ENCODE measurements at regions of chr18 and their contacts with region 1.

Region 1: GRCh38 chr18:55589625-55590291 is 1.8 kb upstream of the TCF4 start:
- DNase-seq: peak; percentile 98
- H3K4me3 ChIP-seq: peak overlapping the region; percentile 57 to 77 (median 76)
- H3K27ac ChIP-seq: peak overlapping the region; percentile 83 to 92 (median 88)
- H3K4me1 ChIP-seq: peaks cover 0 to 21% (median 9%) of the 10 kb centered on the region in 4 donors
- H3K27me3 ChIP-seq: no peaks in the 10 kb centered on the region
- CTCF ChIP-seq: no peak
- EP300 ChIP-seq: peak in 1 of 4 donors; percentile 38
- POLR2A ChIP-seq: peak; percentile 15 to 20

Region 2: GRCh38 chr18:55079481-55080355 is 510.0 kb before region 1 on chr18:
- intact Hi-C with region 1: no loop called
- DNase-seq: no peak
- H3K4me3 ChIP-seq: no peak overlapping the region
- H3K27ac ChIP-seq: no peak overlapping the region
- H3K4me1 ChIP-seq: peaks cover 0 to 7% (median 0%) of the 10 kb centered on the region in 4 donors
- H3K27me3 ChIP-seq: no peaks in the 10 kb centered on the region
- CTCF ChIP-seq: no peak
- EP300 ChIP-seq: no peak
- POLR2A ChIP-seq: no peak

Region 3: DNA sequence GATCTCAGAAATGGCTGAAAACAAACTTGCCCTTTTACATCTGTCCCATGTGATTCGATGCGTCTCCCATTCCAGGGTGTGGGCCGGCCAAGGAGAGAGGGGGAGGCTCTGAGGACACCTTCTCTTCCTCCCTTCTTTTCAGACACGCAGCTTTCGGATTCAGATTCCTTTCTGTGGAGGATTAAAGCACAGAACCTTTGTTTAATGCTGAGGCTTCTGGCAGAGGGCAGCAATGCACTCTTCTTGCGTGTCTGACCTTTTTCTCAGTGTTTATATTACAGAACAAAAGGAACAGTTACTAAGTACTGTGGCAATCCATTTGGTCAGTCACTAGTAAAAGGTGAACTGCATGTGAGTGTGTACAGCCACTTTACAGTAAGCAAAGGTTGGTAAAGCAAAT is 361.6 kb before region 1 on chr18:
- intact Hi-C with region 1: loop called (anchors 5 kb)
- DNase-seq: no peak
- H3K4me3 ChIP-seq: peak overlapping the region in 1 of 4 donors; percentile 5
- H3K27ac ChIP-seq: peak overlapping the region; percentile 65 to 77 (median 71)
- H3K4me1 ChIP-seq: peaks cover 0 to 28% (median 19%) of the 10 kb centered on the region in 4 donors
- H3K27me3 ChIP-seq: no peaks in the 10 kb centered on the region
- CTCF ChIP-seq: no peak
- EP300 ChIP-seq: no peak
- POLR2A ChIP-seq: no peak

Region 4: DNA sequence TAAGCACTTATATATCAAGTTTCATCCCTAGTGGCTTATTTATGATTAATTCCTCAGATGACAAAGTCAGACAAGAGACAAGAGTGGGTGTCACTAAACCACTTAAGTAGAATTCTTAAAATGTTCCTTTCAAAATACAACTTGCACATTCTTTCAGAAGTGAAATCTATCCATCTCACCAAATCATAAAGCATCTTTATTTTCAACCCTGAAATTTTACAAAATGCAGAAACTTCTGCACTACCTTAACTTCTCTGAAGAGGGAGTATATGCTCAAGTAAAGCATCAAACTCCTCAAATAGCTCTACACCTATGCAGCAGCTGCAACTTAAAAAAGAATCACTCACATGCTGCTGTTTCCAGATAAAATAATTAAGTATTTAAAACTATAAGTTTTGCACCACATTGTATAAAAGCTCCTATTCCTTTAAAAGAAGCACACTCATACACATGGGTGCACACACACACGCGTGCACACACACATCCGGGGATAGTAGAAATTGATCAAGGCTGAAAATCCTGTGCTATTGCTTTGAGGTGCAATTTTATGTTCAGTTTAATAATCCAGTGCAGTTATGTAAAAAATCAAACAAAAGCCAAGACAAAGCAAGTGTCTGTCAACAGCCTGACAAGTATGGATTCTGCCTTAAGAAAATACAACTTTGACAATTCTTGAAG is 246.2 kb before region 1 on chr18:
- intact Hi-C with region 1: loop called (anchors 5 kb)
- DNase-seq: no peak
- H3K4me3 ChIP-seq: no peak overlapping the region
- H3K27ac ChIP-seq: peak overlapping the region in 1 of 4 donors; percentile 30
- H3K4me1 ChIP-seq: peaks cover 0 to 64% (median 41%) of the 10 kb centered on the region in 4 donors
- H3K27me3 ChIP-seq: no peaks in the 10 kb centered on the region
- CTCF ChIP-seq: peak; percentile 48 to 62 (median 55)
- EP300 ChIP-seq: no peak
- POLR2A ChIP-seq: no peak

Region 5: GRCh38 chr18:55422456-55423180 is 167.1 kb before region 1 on chr18:
- intact Hi-C with region 1: loop called (anchors 2 kb)
- DNase-seq: peak; percentile 72
- H3K4me3 ChIP-seq: peak overlapping the region; percentile 10 to 38 (median 31)
- H3K27ac ChIP-seq: peak overlapping the region; percentile 50 to 73 (median 69)
- H3K4me1 ChIP-seq: peaks cover 0 to 19% (median 5%) of the 10 kb centered on the region in 4 donors
- H3K27me3 ChIP-seq: no peaks in the 10 kb centered on the region
- CTCF ChIP-seq: no peak
- EP300 ChIP-seq: no peak
- POLR2A ChIP-seq: no peak

Region 6: DNA sequence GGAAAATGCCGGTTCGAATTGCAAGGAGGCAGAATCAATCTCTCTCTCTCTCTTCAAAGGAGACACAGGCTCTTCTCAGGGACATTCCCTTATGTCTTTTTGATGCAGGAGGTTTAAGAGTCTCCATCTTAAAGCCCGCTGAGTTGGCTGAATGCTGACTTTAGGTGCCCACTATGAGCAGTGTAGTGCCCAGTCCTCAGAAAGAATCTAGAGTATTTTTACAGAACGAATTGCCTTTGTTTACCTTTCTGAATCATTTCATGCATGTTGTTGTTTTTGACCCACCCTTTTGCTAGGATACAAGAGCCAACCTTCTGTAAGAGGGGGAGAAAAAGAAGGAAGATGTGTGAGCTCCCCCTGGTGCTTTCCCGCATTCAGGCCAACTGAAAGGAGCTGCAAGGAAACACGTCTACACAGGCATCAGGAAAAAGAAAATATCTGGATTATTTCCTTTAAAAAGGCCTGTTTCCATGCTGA is 191.8 kb after region 1 on chr18:
- intact Hi-C with region 1: loop called (anchors 5 kb)
- DNase-seq: no peak
- H3K4me3 ChIP-seq: no peak overlapping the region
- H3K27ac ChIP-seq: no peak overlapping the region
- H3K4me1 ChIP-seq: peaks cover 0 to 10% (median 0%) of the 10 kb centered on the region in 4 donors
- H3K27me3 ChIP-seq: no peaks in the 10 kb centered on the region
- CTCF ChIP-seq: peak in 3 of 4 experiments; percentile 28 to 57 (median 39)
- EP300 ChIP-seq: no peak
- POLR2A ChIP-seq: no peak